B cell (primary cell): ENCODE measurements at regions of chr13 and their contacts with region 1.

Region 1: GRCh38 chr13:43905435-43906031 is 25.8 kb downstream of the LACC1 start:
- DNase-seq: peak; percentile 70
- ATAC-seq: peak; percentile 72
- H3K4me3 ChIP-seq: no peak overlapping the region
- H3K4me3 Mint-ChIP-seq: no peak overlapping the region
- H3K27ac ChIP-seq: no peak overlapping the region
- H3K27ac Mint-ChIP-seq: no peak overlapping the region
- H3K4me1 ChIP-seq: no peaks in the 10 kb centered on the region
- H3K4me1 Mint-ChIP-seq: peaks cover 1% of the 10 kb centered on the region
- H3K27me3 ChIP-seq: no peaks in the 10 kb centered on the region
- H3K27me3 Mint-ChIP-seq: peaks cover 27% of the 10 kb centered on the region
- CTCF ChIP-seq: peak; percentile 90

Region 2: GRCh38 chr13:43489233-43489632 is 416.3 kb before region 1 on chr13:
- CTCF ChIA-PET with region 1: no interaction called
- POLR2A ChIA-PET with region 1: no interaction called
- intact Hi-C with region 1: no loop called
- DNase-seq: no peak
- ATAC-seq: no peak
- H3K4me3 ChIP-seq: no peak overlapping the region
- H3K4me3 Mint-ChIP-seq: no peak overlapping the region
- H3K27ac ChIP-seq: no peak overlapping the region
- H3K27ac Mint-ChIP-seq: no peak overlapping the region
- H3K4me1 ChIP-seq: no peaks in the 10 kb centered on the region
- H3K4me1 Mint-ChIP-seq: no peaks in the 10 kb centered on the region
- H3K27me3 ChIP-seq: no peaks in the 10 kb centered on the region
- H3K27me3 Mint-ChIP-seq: no peaks in the 10 kb centered on the region
- CTCF ChIP-seq: no peak

Region 3: GRCh38 chr13:44050450-44051063 is 145.0 kb after region 1 on chr13:
- CTCF ChIA-PET with region 1: interaction called, 5 read pairs
- POLR2A ChIA-PET with region 1: no interaction called
- intact Hi-C with region 1: loop called (anchors 5 kb)
- DNase-seq: peak; percentile 50
- ATAC-seq: peak; percentile 31
- H3K4me3 ChIP-seq: no peak overlapping the region
- H3K4me3 Mint-ChIP-seq: no peak overlapping the region
- H3K27ac ChIP-seq: no peak overlapping the region
- H3K27ac Mint-ChIP-seq: no peak overlapping the region
- H3K4me1 ChIP-seq: no peaks in the 10 kb centered on the region
- H3K4me1 Mint-ChIP-seq: no peaks in the 10 kb centered on the region
- H3K27me3 ChIP-seq: peaks cover 0 to 4% (median 2%) of the 10 kb centered on the region in 4 experiments
- H3K27me3 Mint-ChIP-seq: peaks cover 46% of the 10 kb centered on the region
- CTCF ChIP-seq: peak; percentile 91

Region 4: DNA sequence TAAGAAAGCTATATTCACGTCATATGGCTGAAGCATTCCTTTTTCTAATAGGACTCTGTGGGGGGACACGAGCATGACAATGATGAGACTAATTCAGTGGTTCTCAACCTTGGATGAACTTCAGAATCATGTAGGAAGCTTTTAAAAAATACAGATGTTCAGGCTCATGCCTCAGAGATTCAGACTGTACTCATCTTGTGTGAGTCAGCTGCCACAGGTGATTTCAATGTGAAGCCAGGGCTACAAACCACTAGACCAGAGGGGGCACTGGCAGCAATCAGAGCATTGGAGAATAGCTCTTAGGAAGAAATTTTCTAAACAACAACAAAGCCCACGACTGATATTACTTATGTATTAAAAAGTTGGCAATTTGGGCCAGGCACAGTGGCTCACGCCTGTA is 559.8 kb after region 1 on chr13:
- CTCF ChIA-PET with region 1: interaction called, 47 read pairs
- POLR2A ChIA-PET with region 1: no interaction called
- intact Hi-C with region 1: no loop called
- DNase-seq: no peak
- ATAC-seq: no peak
- H3K4me3 ChIP-seq: no peak overlapping the region
- H3K4me3 Mint-ChIP-seq: no peak overlapping the region
- H3K27ac ChIP-seq: no peak overlapping the region
- H3K27ac Mint-ChIP-seq: no peak overlapping the region
- H3K4me1 ChIP-seq: no peaks in the 10 kb centered on the region
- H3K4me1 Mint-ChIP-seq: no peaks in the 10 kb centered on the region
- H3K27me3 ChIP-seq: no peaks in the 10 kb centered on the region
- H3K27me3 Mint-ChIP-seq: no peaks in the 10 kb centered on the region
- CTCF ChIP-seq: no peak

Region 5: GRCh38 chr13:44470638-44471562 is 565.4 kb after region 1 on chr13:
- CTCF ChIA-PET with region 1: interaction called, 47 read pairs
- POLR2A ChIA-PET with region 1: no interaction called
- intact Hi-C with region 1: loop called (anchors 1 kb)
- DNase-seq: peak; percentile 43
- ATAC-seq: no peak
- H3K4me3 ChIP-seq: no peak overlapping the region
- H3K4me3 Mint-ChIP-seq: no peak overlapping the region
- H3K27ac ChIP-seq: no peak overlapping the region
- H3K27ac Mint-ChIP-seq: no peak overlapping the region
- H3K4me1 ChIP-seq: no peaks in the 10 kb centered on the region
- H3K4me1 Mint-ChIP-seq: no peaks in the 10 kb centered on the region
- H3K27me3 ChIP-seq: no peaks in the 10 kb centered on the region
- H3K27me3 Mint-ChIP-seq: no peaks in the 10 kb centered on the region
- CTCF ChIP-seq: peak; percentile 75

Region 6: DNA sequence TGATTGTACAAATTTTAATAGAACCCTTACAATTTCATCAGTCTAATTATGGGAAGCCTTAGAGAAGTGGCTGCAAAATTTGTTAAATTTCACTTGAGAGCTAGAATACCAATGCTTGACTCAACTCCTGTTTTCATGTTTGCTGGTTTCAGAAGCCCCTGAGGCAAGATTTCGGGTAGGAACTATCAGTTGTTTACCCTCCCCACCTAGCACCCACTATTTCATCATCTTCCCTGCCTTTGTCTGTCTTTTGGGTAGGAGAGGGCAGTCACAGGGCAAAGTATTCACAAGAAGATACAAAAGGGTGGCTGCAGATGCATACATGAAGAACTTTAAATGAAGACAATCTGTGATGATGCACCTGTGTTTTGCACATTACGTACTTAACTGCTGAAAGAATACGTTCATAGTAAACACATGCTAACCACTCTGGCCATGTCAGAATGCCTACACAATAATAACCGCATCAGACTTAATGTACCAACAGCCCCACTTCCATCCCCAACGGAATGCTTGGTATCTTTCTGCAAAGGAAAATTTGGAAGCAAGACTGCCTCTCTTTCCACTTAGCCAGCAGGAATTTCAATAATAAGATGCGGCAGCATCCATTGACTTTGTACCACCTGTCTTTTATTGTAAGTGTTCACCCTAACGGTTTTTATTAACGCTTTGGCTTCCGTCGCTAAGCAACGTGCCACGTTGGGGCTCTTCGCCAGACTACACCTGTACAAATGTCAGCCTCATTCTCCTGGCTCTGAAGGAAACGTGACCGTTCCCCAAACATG is 1405.0 kb after region 1 on chr13:
- CTCF ChIA-PET with region 1: interaction called, 3 read pairs
- POLR2A ChIA-PET with region 1: no interaction called
- intact Hi-C with region 1: loop called (anchors 5 kb)
- DNase-seq: no peak
- ATAC-seq: no peak
- H3K4me3 ChIP-seq: peak overlapping the region in 3 of 5 experiments; percentile 53 to 69 (median 57)
- H3K4me3 Mint-ChIP-seq: peak overlapping the region; percentile 84
- H3K27ac ChIP-seq: no peak overlapping the region
- H3K27ac Mint-ChIP-seq: no peak overlapping the region
- H3K4me1 ChIP-seq: peaks cover 11 to 16% of the 10 kb centered on the region in 2 donors
- H3K4me1 Mint-ChIP-seq: peaks cover 17% of the 10 kb centered on the region
- H3K27me3 ChIP-seq: peaks cover 0 to 21% (median 13%) of the 10 kb centered on the region in 4 experiments
- H3K27me3 Mint-ChIP-seq: peaks cover 34% of the 10 kb centered on the region
- CTCF ChIP-seq: no peak